Activated CD4-positive, alpha-beta T cell treated with anti-CD3 and anti-CD28 coated beads for 36 hours (primary cell): ENCODE measurements at regions of chr20 and their contacts with region 1.

Region 1: GRCh38 chr20:34129518-34130162 is 17.6 kb upstream of the EIF2S2 start:
- DNase-seq: peak; percentile 68
- ATAC-seq: peak; percentile 90
- H3K4me3 Mint-ChIP-seq: no peak overlapping the region
- H3K27ac Mint-ChIP-seq: no peak overlapping the region
- H3K4me1 Mint-ChIP-seq: peaks cover 8% of the 10 kb centered on the region
- H3K27me3 Mint-ChIP-seq: peaks cover 5% of the 10 kb centered on the region

Region 2: DNA sequence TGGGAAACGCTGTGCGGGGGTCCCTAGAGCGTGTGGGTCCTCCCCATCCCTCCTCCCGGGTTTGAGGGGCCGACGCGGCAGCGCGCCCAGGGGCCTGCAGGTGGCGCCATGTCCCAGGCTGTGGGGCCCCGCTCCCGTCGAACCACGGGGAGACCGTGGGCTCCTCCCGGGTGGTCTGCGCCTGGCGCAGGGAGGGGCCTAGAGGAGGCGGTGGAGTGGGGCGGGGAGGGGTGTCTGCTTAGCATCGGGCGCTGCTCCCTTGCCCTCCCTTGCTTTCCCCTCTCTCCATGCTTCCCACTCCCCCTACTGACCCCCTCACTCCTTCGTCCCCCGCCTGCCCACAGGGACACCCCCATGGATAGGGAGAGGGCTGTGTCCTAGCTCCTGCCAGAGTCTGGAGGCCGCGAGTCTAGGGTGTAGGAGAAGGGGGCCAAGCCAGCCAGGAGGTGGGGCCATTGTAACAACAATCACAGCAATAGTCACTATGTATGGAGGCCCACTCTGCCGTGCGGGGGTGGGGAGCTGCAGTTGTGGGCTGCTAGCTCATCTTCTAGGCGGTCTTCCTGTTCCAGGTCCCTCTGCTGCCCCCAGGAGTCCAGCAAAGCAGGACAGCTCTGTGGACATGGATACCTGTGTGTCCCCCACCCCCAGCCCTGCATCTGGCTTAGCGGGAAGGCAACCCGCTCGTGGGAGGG is 266.8 kb before region 1 on chr20:
- CTCF ChIA-PET with region 1: interaction called, 3 read pairs
- POLR2A ChIA-PET with region 1: no interaction called
- intact Hi-C with region 1: loop called (anchors 1 to 2 kb)
- DNase-seq: peak; percentile 69
- ATAC-seq: peak; percentile 60
- H3K4me3 Mint-ChIP-seq: no peak overlapping the region
- H3K27ac Mint-ChIP-seq: no peak overlapping the region
- H3K4me1 Mint-ChIP-seq: peaks cover 20% of the 10 kb centered on the region
- H3K27me3 Mint-ChIP-seq: no peaks in the 10 kb centered on the region

Region 3: DNA sequence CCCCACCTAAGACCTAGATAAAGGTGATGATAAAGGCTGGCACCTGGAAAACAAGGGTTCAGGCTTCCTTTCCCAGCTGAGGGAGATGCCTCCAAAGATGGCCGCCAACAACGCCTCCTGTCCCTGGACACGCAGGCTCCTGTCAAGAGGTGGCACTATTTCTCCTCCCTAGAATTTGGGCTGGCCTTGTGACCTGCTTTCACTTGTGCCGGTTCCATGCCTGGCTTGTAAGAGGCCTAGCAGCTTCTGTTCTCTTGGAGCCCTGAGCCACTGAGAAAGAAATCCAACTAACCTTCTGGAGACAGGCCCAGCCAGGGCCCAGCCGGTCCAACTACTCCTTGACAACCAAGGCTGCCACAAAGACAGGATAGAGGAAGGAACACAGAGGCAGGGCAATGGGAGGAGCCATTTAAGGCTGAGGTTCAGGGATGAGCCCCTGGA is 196.2 kb before region 1 on chr20:
- CTCF ChIA-PET with region 1: interaction called, 6 read pairs
- POLR2A ChIA-PET with region 1: no interaction called
- intact Hi-C with region 1: loop called (anchors 1 kb)
- DNase-seq: peak; percentile 78
- ATAC-seq: peak; percentile 96
- H3K4me3 Mint-ChIP-seq: no peak overlapping the region
- H3K27ac Mint-ChIP-seq: no peak overlapping the region
- H3K4me1 Mint-ChIP-seq: no peaks in the 10 kb centered on the region
- H3K27me3 Mint-ChIP-seq: no peaks in the 10 kb centered on the region

Region 4: GRCh38 chr20:34069341-34070078 is 60.1 kb before region 1 on chr20:
- CTCF ChIA-PET with region 1: interaction called, 4 read pairs
- POLR2A ChIA-PET with region 1: no interaction called
- intact Hi-C with region 1: loop called in 1 of 2 experiments (anchors 1 kb)
- DNase-seq: peak; percentile 71
- ATAC-seq: peak; percentile 83
- H3K4me3 Mint-ChIP-seq: no peak overlapping the region
- H3K27ac Mint-ChIP-seq: no peak overlapping the region
- H3K4me1 Mint-ChIP-seq: peaks cover 46% of the 10 kb centered on the region
- H3K27me3 Mint-ChIP-seq: no peaks in the 10 kb centered on the region

Region 5: GRCh38 chr20:34111702-34112599 is 17.7 kb before region 1 on chr20 and contains the start of gene EIF2S2:
- CTCF ChIA-PET with region 1: interaction called, 11 read pairs
- POLR2A ChIA-PET with region 1: no interaction called
- intact Hi-C with region 1: no loop called
- DNase-seq: peak; percentile 97
- ATAC-seq: peak; percentile 88
- H3K4me3 Mint-ChIP-seq: peak within 1 kb of the TSS; percentile 86
- H3K27ac Mint-ChIP-seq: peak within 1 kb of the TSS; percentile 97
- H3K4me1 Mint-ChIP-seq: peaks cover 38% of the 10 kb centered on the region
- H3K27me3 Mint-ChIP-seq: no peaks in the 10 kb centered on the region
- total RNA-seq, gene EIF2S2: 179 to 187 TPM